T-cell (primary cell): ENCODE measurements at regions of chr6 and their contacts with region 1.

Region 1: DNA sequence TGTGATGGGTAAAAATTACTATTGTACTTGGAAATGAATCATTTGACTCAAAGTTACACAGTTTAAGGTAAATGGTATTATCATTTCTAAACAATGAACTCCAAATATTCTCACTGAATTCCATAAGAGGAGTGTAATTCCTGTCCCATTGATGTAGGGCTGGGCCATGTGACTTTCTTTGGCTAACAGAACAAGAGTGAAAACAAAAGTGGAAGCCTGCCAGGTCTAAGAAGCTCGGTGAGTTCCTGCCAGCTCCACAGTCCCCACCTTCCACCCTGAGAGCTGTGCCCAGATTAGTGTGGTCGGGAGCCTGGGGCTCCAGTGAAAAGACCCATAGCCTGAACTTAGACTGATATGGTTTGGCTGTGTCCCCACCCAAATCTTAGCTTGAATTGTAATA is 24.6 kb downstream of the TBXT start:
- DNase-seq: no peak
- ATAC-seq: no peak
- H3K4me3 ChIP-seq: no peak overlapping the region
- H3K4me3 Mint-ChIP-seq: no peak overlapping the region
- H3K27ac ChIP-seq: no peak overlapping the region
- H3K27ac Mint-ChIP-seq: no peak overlapping the region
- H3K4me1 ChIP-seq: no peaks in the 10 kb centered on the region
- H3K4me1 Mint-ChIP-seq: no peaks in the 10 kb centered on the region
- H3K27me3 ChIP-seq: peaks cover 0 to 10% of the 10 kb centered on the region in 2 experiments
- H3K27me3 Mint-ChIP-seq: peaks cover 16 to 33% of the 10 kb centered on the region in 2 donors

Region 2: DNA sequence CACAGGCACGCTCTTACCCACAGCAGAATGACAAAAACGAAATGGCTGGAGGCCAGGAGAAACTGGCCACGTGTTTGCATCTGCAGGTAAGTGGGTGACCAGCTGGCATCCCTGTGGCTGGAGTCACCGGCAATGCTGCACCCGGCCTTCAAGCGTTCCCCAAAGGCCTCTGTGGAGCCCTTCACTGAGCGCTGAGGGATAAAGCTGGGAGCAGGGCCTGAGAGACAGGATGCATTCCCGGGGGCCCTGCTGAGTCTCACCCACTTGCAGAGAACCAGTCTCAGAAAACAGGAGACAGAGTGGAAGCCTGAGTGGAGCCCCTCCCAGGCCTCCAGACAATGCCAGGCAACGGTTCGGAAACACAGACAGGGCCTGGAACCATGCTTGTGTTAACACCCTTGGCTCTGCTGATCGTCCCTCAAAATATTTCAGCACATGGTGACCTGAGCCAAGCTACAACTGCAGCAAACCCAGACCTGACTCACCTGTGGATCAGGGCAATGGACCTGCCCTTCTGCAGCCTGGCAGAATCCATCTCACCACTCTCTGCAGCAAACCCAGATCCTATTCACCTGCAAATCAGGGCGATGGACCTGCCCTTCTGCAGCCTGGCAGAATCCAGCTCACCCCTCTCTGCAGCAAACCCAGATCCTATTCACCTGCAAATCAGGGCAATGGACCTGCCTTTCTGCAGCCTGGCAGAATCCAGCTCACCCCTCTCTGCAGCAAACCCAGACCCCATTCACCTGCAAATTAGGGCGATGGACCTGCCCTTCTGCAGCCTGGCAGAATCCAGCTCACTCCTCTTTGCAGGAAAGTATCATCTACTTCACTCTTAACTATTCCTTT is 15.2 kb before region 1 on chr6:
- CTCF ChIA-PET with region 1: no interaction called
- POLR2A ChIA-PET with region 1: no interaction called
- DNase-seq: no peak
- ATAC-seq: peak in 1 of 4 experiments; percentile 9
- H3K4me3 ChIP-seq: no peak overlapping the region
- H3K4me3 Mint-ChIP-seq: no peak overlapping the region
- H3K27ac ChIP-seq: no peak overlapping the region
- H3K27ac Mint-ChIP-seq: no peak overlapping the region
- H3K4me1 ChIP-seq: no peaks in the 10 kb centered on the region
- H3K4me1 Mint-ChIP-seq: no peaks in the 10 kb centered on the region
- H3K27me3 ChIP-seq: peaks cover 0 to 27% of the 10 kb centered on the region in 2 experiments
- H3K27me3 Mint-ChIP-seq: peaks cover 42 to 48% of the 10 kb centered on the region in 2 donors

Region 3: DNA sequence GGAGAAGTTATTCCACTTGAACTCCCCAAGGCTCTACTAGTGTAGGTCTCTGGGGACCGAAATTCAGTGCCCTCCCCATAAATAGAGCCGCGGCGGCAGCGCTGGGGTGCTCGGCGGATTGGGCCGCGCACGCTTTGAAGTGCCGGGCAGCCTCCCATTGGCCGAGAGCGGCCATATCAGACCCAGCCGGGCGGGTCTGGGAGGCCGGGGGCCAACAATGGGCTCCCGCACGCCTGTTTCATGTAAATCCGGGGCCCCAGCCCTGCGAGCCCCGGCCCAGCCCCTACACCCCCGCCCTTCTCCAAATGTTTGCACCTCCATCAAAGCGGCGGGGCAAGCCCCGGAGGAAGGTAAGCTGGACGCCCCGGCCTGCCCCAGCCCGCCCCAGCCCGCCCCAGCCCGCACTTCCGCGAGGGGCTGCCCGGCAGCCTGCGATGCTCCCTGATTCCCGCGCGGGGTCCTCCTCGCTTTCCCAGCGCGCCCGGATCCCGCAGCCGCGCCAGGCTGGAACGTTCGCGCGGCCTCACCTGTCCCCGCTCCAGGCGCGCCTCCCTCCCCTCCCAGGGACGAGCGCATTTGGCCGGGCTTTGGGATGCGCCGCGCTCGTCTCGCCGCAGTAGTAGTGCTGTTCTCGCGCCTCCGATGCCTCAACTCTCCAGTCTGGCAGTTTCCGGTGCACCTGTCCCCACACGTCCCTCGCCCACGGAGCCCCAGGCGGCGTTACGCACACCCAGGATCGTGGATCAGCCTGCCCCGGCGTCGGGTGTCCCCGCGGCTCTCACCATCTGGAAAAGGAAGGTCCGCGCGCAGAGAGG is 25.0 kb after region 1 on chr6 and contains the start of gene TBXT:
- CTCF ChIA-PET with region 1: interaction called in 1 of 2 experiments, 11 read pairs
- POLR2A ChIA-PET with region 1: no interaction called
- DNase-seq: no peak
- ATAC-seq: peak in 1 of 4 experiments; percentile 48
- H3K4me3 ChIP-seq: peak within 1 kb of the TSS in 1 of 2 donors; percentile 53
- H3K4me3 Mint-ChIP-seq: peak within 1 kb of the TSS; percentile 25 to 77 (median 73)
- H3K27ac ChIP-seq: no peak within 1 kb of the TSS
- H3K27ac Mint-ChIP-seq: peak within 1 kb of the TSS in 1 of 2 donors; percentile 52
- H3K4me1 ChIP-seq: peaks cover 8 to 10% of the 10 kb centered on the region in 2 experiments
- H3K4me1 Mint-ChIP-seq: peaks cover 5 to 26% (median 6%) of the 10 kb centered on the region in 3 donors
- H3K27me3 ChIP-seq: peaks cover 23 to 71% of the 10 kb centered on the region in 2 experiments
- H3K27me3 Mint-ChIP-seq: peaks cover 56 to 63% of the 10 kb centered on the region in 2 donors
- total RNA-seq, gene TBXT: not detected

Region 4: GRCh38 chr6:166499350-166500163 is 356.5 kb after region 1 on chr6:
- CTCF ChIA-PET with region 1: no interaction called
- POLR2A ChIA-PET with region 1: no interaction called
- DNase-seq: no peak
- ATAC-seq: no peak
- H3K4me3 ChIP-seq: no peak overlapping the region
- H3K4me3 Mint-ChIP-seq: no peak overlapping the region
- H3K27ac ChIP-seq: no peak overlapping the region
- H3K27ac Mint-ChIP-seq: peak overlapping the region in 1 of 2 donors; percentile 5
- H3K4me1 ChIP-seq: peaks cover 0 to 8% of the 10 kb centered on the region in 2 experiments
- H3K4me1 Mint-ChIP-seq: peaks cover 0 to 8% (median 5%) of the 10 kb centered on the region in 3 donors
- H3K27me3 ChIP-seq: peaks cover 0 to 8% of the 10 kb centered on the region in 2 experiments
- H3K27me3 Mint-ChIP-seq: no peaks in the 10 kb centered on the region